ENCODE measurements at regions of chr15 and their contacts with region 1.

Region 1: GRCh38 chr15:90362936-90363212 is 10.8 kb downstream of the ZNF774 start:
- DNase-seq: peak; percentile 53
- H3K4me3 ChIP-seq: no peak overlapping the region
- H3K27ac ChIP-seq: peak overlapping the region; percentile 86
- H3K4me1 ChIP-seq: peaks cover 31% of the 10 kb centered on the region
- H3K27me3 ChIP-seq: no peaks in the 10 kb centered on the region
- CTCF ChIP-seq: no peak
- POLR2A ChIP-seq: no peak

Region 2: GRCh38 chr15:90376789-90377188 is 13.9 kb after region 1 on chr15:
- CTCF ChIA-PET with region 1: interaction called, 10 read pairs
- POLR2A ChIA-PET with region 1: no interaction called
- dilution Hi-C with region 1: no loop called
- intact Hi-C with region 1: loop called (anchors 1 kb)
- DNase-seq: peak; percentile 72
- H3K4me3 ChIP-seq: no peak overlapping the region
- H3K27ac ChIP-seq: peak overlapping the region; percentile 56
- H3K4me1 ChIP-seq: peaks cover 18% of the 10 kb centered on the region
- H3K27me3 ChIP-seq: no peaks in the 10 kb centered on the region
- CTCF ChIP-seq: no peak
- POLR2A ChIP-seq: no peak

Region 3: GRCh38 chr15:90400406-90401314 is 37.8 kb after region 1 on chr15:
- CTCF ChIA-PET with region 1: interaction called, 11 read pairs
- POLR2A ChIA-PET with region 1: no interaction called
- dilution Hi-C with region 1: no loop called
- intact Hi-C with region 1: loop called (anchors 1 kb)
- DNase-seq: peak; percentile 96
- H3K4me3 ChIP-seq: peak overlapping the region in 1 of 3 experiments; percentile 54
- H3K27ac ChIP-seq: peak overlapping the region; percentile 100
- H3K4me1 ChIP-seq: peaks cover 54% of the 10 kb centered on the region
- H3K27me3 ChIP-seq: no peaks in the 10 kb centered on the region
- CTCF ChIP-seq: no peak
- POLR2A ChIP-seq: no peak

Region 4: DNA sequence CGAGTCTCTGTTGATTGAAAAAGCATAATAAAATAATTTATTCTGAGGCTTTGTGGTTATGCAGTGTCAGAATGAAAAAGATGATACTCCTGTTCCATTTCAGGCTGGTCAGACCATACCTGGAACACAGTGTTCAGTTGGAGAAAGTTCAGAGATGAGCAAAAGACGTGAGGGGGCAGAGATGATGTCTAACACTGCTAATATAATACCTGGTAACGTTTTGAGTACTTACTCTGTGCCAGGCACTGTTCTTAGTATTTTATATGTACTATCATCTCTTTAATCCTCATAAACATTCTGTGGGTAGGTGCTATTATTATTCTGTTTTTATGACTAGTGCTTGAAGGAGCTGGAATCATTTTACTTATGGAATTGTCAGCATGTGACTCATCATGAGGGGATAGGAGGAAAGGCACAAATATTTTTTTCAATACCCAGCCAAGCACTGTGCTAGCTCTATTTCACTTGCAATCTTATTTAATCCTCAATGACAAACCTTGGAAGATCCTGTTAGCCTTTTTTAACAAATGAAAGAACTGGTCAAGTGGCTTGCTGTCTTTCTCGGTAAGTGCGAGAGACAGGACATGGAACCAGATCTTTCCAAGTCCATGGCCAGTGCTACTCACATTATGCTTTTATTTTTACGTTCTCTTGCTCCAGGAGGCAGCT is 57.0 kb after region 1 on chr15:
- CTCF ChIA-PET with region 1: interaction called, 13 read pairs
- POLR2A ChIA-PET with region 1: no interaction called
- dilution Hi-C with region 1: no loop called
- intact Hi-C with region 1: no loop called
- DNase-seq: peak; percentile 80
- H3K4me3 ChIP-seq: no peak overlapping the region
- H3K27ac ChIP-seq: peak overlapping the region; percentile 80
- H3K4me1 ChIP-seq: peaks cover 38% of the 10 kb centered on the region
- H3K27me3 ChIP-seq: no peaks in the 10 kb centered on the region
- CTCF ChIP-seq: no peak
- POLR2A ChIP-seq: peak; percentile 28

Region 5: DNA sequence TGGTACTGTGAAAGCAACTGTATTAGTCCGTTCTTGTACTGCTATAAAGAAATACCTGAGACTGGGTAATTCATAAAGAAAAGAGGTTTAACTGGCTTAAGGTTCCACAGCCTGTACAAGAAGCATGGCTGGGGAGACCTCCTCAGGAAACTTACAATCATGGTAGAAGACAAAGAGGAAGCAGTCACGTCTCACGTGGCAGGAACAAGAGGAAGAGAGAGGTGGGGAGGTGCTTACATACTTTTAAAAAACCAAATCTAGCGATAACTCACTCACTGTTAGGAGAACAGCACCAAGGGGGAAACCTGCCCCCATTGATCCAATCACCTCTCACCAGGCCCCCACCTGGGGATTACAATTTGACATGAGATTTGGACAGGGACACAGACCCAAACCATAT is 74.1 kb after region 1 on chr15:
- CTCF ChIA-PET with region 1: interaction called, 18 read pairs
- POLR2A ChIA-PET with region 1: no interaction called
- dilution Hi-C with region 1: no loop called
- intact Hi-C with region 1: loop called (anchors 2 kb)
- DNase-seq: no peak
- H3K4me3 ChIP-seq: no peak overlapping the region
- H3K27ac ChIP-seq: no peak overlapping the region
- H3K4me1 ChIP-seq: peaks cover 50% of the 10 kb centered on the region
- H3K27me3 ChIP-seq: no peaks in the 10 kb centered on the region
- CTCF ChIP-seq: no peak
- POLR2A ChIP-seq: no peak

Region 6: GRCh38 chr15:90463381-90463780 is 100.5 kb after region 1 on chr15:
- CTCF ChIA-PET with region 1: interaction called, 30 read pairs
- POLR2A ChIA-PET with region 1: no interaction called
- dilution Hi-C with region 1: no loop called
- intact Hi-C with region 1: loop called (anchors 1 kb)
- DNase-seq: peak; percentile 93
- H3K4me3 ChIP-seq: no peak overlapping the region
- H3K27ac ChIP-seq: peak overlapping the region; percentile 70
- H3K4me1 ChIP-seq: peaks cover 58% of the 10 kb centered on the region
- H3K27me3 ChIP-seq: no peaks in the 10 kb centered on the region
- CTCF ChIP-seq: no peak
- POLR2A ChIP-seq: no peak

Region 7: DNA sequence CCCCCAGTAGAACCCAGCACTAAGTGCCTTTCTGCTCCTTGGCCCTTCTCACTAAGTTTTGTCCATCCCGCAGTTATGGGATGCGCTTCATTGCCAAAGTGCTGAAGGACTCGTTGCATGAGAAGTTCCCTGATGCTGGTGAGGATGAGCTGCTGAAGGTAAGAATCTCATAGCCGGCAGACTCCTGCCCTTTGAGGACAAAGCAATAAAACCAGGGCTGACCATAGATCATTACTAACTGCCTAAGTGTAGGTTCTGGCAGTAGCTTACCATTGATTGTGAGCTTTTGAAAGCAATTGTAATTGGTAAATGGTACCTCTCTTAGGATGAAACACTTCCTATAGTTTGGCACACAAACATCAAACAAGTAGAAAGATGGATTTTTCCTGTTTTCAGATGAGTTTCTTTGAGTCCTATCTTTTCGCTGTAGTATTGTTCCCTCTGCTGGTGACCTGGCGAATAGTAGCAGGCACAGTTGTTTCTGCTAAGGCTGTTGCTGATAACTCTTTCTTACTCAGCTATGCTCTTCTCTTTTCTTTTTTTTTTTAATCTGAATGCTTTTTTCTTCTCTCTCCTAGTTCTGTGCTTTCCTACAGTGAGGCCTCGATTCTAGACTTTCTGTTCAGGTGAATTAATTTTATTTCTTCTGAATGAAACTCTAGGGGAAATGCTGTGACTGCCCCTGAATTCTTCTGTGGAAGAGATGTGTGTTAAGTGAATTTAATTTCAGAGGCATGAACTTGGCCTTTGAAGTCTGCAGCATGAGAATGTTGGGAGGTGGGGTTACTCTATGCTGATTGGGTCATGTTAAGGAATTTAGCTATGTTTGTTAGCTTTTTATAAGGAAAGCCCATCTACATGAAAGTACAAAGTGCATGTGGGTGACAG is 119.5 kb after region 1 on chr15:
- CTCF ChIA-PET with region 1: interaction called, 99 read pairs
- POLR2A ChIA-PET with region 1: no interaction called
- dilution Hi-C with region 1: no loop called
- intact Hi-C with region 1: loop called (anchors 1 kb)
- DNase-seq: peak; percentile 78
- H3K4me3 ChIP-seq: no peak overlapping the region
- H3K27ac ChIP-seq: no peak overlapping the region
- H3K4me1 ChIP-seq: peaks cover 11% of the 10 kb centered on the region
- H3K27me3 ChIP-seq: no peaks in the 10 kb centered on the region
- CTCF ChIP-seq: peak; percentile 47 to 67
- POLR2A ChIP-seq: no peak

Measured in endothelial cell of umbilical vein (primary cell).